Mammary epithelial cell (primary cell): ENCODE measurements at regions of chr2 and their contacts with region 1.

Region 1: GRCh38 chr2:63861220-63861822 is 19.6 kb downstream of the UGP2 start:
- DNase-seq: no peak
- H3K4me3 ChIP-seq: no peak overlapping the region
- H3K27ac ChIP-seq: no peak overlapping the region
- H3K4me1 ChIP-seq: peaks cover 40% of the 10 kb centered on the region
- H3K27me3 ChIP-seq: no peaks in the 10 kb centered on the region
- CTCF ChIP-seq: peak; percentile 40 to 57

Region 2: GRCh38 chr2:63588385-63589147 is 272.8 kb before region 1 on chr2 and contains the starts of genes MDH1 and WDPCP:
- CTCF ChIA-PET with region 1: no interaction called
- dilution Hi-C with region 1: no loop called
- in situ Hi-C with region 1: no loop called
- intact Hi-C with region 1: loop called (anchors 5 kb)
- DNase-seq: peak; percentile 100
- H3K4me3 ChIP-seq: peak within 1 kb of the TSS; percentile 77 to 91 (median 88)
- H3K27ac ChIP-seq: peak within 1 kb of the TSS; percentile 50
- H3K4me1 ChIP-seq: peaks cover 16% of the 10 kb centered on the region
- H3K27me3 ChIP-seq: no peaks in the 10 kb centered on the region
- CTCF ChIP-seq: no peak
- total RNA-seq, gene MDH1: 112 to 133 TPM
- total RNA-seq, gene WDPCP: 5.4 to 11.0 TPM

Region 3: GRCh38 chr2:63692002-63692606 is 169.2 kb before region 1 on chr2:
- CTCF ChIA-PET with region 1: no interaction called
- dilution Hi-C with region 1: no loop called
- in situ Hi-C with region 1: loop called in 1 of 2 experiments (anchors 10 kb)
- intact Hi-C with region 1: loop called (anchors 1 kb)
- DNase-seq: peak; percentile 25
- H3K4me3 ChIP-seq: no peak overlapping the region
- H3K27ac ChIP-seq: no peak overlapping the region
- H3K4me1 ChIP-seq: peaks cover 8% of the 10 kb centered on the region
- H3K27me3 ChIP-seq: no peaks in the 10 kb centered on the region
- CTCF ChIP-seq: peak; percentile 36 to 53